ENCODE measurements at regions of chr4 and their contacts with region 1.

Region 1: GRCh38 chr4:58564695-58565475 is 1454.7 kb upstream of the IGFBP7 start:
- DNase-seq: no peak
- H3K4me3 ChIP-seq: no peak overlapping the region
- H3K27ac ChIP-seq: no peak overlapping the region
- H3K4me1 ChIP-seq: no peaks in the 10 kb centered on the region
- H3K27me3 ChIP-seq: no peaks in the 10 kb centered on the region
- CTCF ChIP-seq: no peak
- EP300 ChIP-seq: no peak
- POLR2A ChIP-seq: no peak

Region 2: DNA sequence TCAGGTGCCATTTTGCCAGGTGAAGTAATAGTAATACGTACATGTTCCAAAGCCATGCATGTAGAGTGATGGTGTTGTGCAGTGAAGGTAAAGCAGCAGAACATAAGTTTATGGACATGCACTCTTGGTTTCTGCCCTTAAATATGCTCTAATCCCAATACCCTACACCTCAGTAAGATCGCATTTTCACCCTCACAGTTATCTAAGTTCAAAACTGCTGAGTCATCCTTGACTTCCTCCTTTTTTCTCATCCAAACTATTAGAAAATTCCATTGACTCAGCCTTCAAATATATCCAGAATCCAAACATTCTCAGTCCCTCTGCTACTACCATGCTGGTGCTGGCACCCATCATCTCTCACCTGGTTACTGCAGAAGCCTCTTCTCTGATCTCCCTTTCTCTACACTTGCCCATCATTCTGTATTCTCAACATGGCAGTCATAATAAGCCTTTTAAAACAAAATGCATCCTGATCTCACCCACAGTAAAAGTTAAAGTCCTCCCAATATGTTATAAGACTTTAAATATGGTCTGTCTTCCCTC is 801.7 kb before region 1 on chr4:
- in situ Hi-C with region 1: no loop called
- intact Hi-C with region 1: loop called (anchors 5 kb)
- DNase-seq: no peak
- H3K4me3 ChIP-seq: no peak overlapping the region
- H3K27ac ChIP-seq: no peak overlapping the region
- H3K4me1 ChIP-seq: no peaks in the 10 kb centered on the region
- H3K27me3 ChIP-seq: no peaks in the 10 kb centered on the region
- CTCF ChIP-seq: no peak
- EP300 ChIP-seq: no peak
- POLR2A ChIP-seq: no peak

Region 3: DNA sequence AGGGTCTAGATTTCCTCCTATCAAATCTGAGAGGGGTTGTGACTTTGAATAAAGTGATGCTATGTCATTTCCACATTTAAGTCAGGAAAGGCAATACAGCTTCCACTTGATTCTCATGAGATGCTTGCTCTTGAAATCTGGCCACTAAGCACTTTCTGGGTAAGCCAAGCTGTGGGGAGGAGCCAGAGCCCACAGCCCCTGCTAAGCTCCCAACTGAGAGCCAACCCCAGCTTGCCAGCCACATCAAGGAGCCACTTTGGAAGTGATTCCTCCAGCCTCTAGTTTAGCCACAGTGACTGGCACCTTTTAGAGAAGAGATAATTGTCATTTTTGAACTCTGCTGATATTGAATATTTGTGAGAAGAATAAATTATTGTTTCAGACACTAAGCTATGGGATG is 13.2 kb before region 1 on chr4:
- in situ Hi-C with region 1: no loop called
- intact Hi-C with region 1: no loop called
- DNase-seq: no peak
- H3K4me3 ChIP-seq: no peak overlapping the region
- H3K27ac ChIP-seq: no peak overlapping the region
- H3K4me1 ChIP-seq: no peaks in the 10 kb centered on the region
- H3K27me3 ChIP-seq: no peaks in the 10 kb centered on the region
- CTCF ChIP-seq: no peak
- EP300 ChIP-seq: no peak
- POLR2A ChIP-seq: no peak

Region 4: GRCh38 chr4:58617231-58617630 is 52.3 kb after region 1 on chr4:
- in situ Hi-C with region 1: loop called in 1 of 4 experiments (anchors 10 kb)
- intact Hi-C with region 1: no loop called
- DNase-seq: no peak
- H3K4me3 ChIP-seq: no peak overlapping the region
- H3K27ac ChIP-seq: no peak overlapping the region
- H3K4me1 ChIP-seq: no peaks in the 10 kb centered on the region
- H3K27me3 ChIP-seq: no peaks in the 10 kb centered on the region
- CTCF ChIP-seq: no peak
- EP300 ChIP-seq: no peak
- POLR2A ChIP-seq: no peak

Measured in transverse colon (tissue), 4 donors.